Activated B cell treated with CpG ODN at 0.5 μM for 24 hours (primary cell): ENCODE measurements at regions of chr19 and their contacts with region 1.

Region 1: GRCh38 chr19:7488736-7489353 is at the start of gene PEX11G:
- DNase-seq: peak; percentile 98
- ATAC-seq: peak; percentile 99
- H3K4me3 Mint-ChIP-seq: peak within 1 kb of the TSS; percentile 79
- H3K27ac Mint-ChIP-seq: peak within 1 kb of the TSS; percentile 69
- H3K4me1 Mint-ChIP-seq: peaks cover 10% of the 10 kb centered on the region
- H3K27me3 Mint-ChIP-seq: peaks cover 3% of the 10 kb centered on the region
- CTCF ChIP-seq: no peak
- total RNA-seq, gene PEX11G: 0.61 and 1.0 TPM in 2 replicates

Region 2: DNA sequence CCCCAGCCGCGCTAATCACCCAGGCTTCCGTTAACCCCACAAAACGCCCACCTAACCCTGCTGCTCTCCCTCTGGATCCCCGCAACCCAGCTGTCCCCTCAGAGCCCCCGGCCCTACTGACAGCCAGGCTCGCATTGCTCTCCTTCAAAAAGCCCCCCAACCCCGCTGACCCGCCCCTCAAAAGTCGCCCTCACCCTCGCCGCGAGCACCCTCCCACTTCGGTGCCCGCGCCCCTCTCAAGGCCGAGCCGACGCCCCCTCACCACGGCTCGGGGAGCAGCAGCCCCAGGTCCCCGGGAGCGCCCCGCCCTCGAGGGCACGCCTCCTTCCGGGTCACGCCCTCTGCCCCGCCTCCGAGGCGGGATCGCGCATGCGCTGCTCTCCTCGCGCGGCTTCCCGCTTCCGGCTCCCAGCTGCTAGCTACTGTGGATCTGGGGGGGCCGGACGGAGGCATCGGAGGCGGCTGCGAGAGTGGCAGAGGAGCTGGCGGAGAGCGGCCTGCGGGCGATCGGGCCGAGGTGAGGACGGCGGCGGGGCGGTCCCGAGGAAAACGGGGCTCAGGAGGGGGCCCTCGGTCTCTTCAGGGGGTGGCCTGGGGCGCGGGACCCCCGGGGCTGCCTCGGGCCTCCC is 94.0 kb before region 1 on chr19:
- CTCF ChIA-PET with region 1: no interaction called
- POLR2A ChIA-PET with region 1: interaction called, 4 read pairs
- intact Hi-C with region 1: loop called (anchors 10 kb)
- DNase-seq: peak; percentile 96
- ATAC-seq: peak; percentile 83
- H3K4me3 Mint-ChIP-seq: peak overlapping the region; percentile 92
- H3K27ac Mint-ChIP-seq: peak overlapping the region; percentile 87
- H3K4me1 Mint-ChIP-seq: peaks cover 41% of the 10 kb centered on the region
- H3K27me3 Mint-ChIP-seq: no peaks in the 10 kb centered on the region
- CTCF ChIP-seq: no peak

Region 3: GRCh38 chr19:7460562-7460966 is 28.3 kb before region 1 on chr19:
- CTCF ChIA-PET with region 1: no interaction called
- POLR2A ChIA-PET with region 1: no interaction called
- intact Hi-C with region 1: no loop called
- DNase-seq: no peak
- ATAC-seq: no peak
- H3K4me3 Mint-ChIP-seq: no peak overlapping the region
- H3K27ac Mint-ChIP-seq: no peak overlapping the region
- H3K4me1 Mint-ChIP-seq: no peaks in the 10 kb centered on the region
- H3K27me3 Mint-ChIP-seq: no peaks in the 10 kb centered on the region
- CTCF ChIP-seq: no peak

Region 4: DNA sequence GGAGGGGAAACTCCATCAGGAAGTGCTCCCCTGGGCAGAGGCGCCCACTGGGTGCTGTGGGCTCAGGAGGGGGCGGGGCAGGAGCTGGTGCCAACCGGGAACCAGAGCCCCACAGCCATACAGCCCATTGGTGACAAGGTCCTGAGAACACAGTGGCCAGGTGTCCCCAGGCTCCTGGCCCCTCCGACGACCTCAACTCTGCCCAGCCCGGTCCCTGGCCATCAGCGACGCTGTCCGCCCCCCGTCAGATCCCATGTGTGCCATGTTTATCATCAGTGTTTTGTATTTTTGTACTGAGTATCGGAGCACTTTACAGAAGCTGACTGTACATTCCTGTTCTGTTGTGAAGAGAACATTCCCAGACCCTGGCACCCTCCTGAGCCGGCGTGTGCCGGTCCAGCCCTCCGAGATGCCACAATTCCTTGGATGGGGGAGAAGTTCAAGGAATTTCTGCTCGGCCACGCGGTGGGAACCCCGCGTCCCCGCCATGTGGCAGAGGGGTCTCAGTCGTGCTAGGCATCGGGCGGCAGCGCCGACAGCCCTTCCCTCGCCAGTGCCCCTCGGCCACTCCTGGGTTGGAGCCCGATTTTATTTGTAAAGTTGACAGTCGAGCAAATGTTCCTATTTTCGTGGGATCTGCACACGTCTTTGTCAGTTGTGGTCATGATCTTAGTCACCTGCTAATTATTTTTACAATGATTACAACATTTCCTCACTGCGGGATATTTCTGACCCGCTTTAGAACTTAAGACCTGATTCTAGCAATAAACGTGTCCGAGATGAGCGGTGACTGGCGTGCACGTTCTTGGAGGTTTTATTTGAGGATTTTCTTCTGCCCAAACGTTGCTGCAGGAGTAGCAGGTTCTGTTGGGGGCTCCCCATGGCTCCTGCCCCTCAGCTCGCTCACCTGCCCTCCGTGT is 16.9 kb before region 1 on chr19:
- CTCF ChIA-PET with region 1: interaction called, 3 read pairs
- POLR2A ChIA-PET with region 1: interaction called, 3 read pairs
- intact Hi-C with region 1: loop called (anchors 2 kb)
- DNase-seq: no peak
- ATAC-seq: no peak
- H3K4me3 Mint-ChIP-seq: no peak overlapping the region
- H3K27ac Mint-ChIP-seq: peak overlapping the region; percentile 90
- H3K4me1 Mint-ChIP-seq: peaks cover 24% of the 10 kb centered on the region
- H3K27me3 Mint-ChIP-seq: no peaks in the 10 kb centered on the region
- CTCF ChIP-seq: no peak

Region 5: DNA sequence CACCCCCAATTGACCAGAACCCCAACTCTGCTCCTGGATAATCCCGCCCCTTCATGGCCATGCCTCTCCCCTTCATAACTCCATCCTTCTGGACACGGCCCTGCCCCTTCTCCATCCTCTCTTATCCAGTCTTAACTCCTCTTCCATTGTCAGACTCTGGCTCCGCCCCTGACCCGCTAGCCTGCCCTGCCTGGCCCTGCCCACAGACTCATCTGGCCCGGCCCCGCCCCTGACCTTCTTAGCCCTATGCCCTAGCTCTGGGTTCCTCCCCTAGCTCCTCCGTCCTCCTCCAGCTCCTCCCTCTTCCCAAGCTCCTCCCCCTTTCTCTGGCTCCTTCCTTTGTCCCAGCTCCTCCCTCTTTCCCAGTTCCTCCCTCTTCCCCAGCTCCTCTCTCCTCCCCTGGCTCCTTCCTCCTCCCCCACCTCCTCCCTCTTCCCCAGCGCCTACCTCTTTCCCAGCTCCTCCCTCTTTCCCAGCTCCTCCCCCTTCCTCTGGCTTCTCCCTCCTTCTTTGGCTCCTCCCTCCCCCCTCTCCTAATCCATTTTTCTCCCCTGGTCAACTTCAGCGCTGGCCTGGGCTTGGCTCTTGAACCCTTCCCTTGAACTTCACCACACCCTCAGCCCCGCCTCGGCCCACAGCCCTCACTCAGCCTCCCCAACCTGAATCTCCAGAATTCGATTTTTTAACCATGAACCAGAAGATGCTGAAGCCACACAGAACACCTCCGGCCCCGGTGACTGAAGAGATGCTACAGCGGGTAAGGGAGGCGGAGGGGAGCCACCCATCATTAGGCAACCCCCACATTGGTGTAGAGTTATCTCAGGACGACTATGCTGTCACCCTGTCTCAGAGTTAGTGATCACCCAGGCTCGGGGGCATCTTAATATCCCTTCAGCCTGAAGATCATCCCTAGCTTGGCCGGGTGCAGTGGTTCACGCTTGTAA is 17.8 kb after region 1 on chr19:
- CTCF ChIA-PET with region 1: no interaction called
- POLR2A ChIA-PET with region 1: interaction called, 5 read pairs
- intact Hi-C with region 1: loop called (anchors 2 kb)
- DNase-seq: no peak
- ATAC-seq: peak; percentile 78
- H3K4me3 Mint-ChIP-seq: no peak overlapping the region
- H3K27ac Mint-ChIP-seq: no peak overlapping the region
- H3K4me1 Mint-ChIP-seq: peaks cover 14% of the 10 kb centered on the region
- H3K27me3 Mint-ChIP-seq: peaks cover 31% of the 10 kb centered on the region
- CTCF ChIP-seq: no peak